Caco-2 (cell line): ENCODE measurements at regions of chr13 and their contacts with region 1.

Region 1: GRCh38 chr13:113863436-113864272 is at the start of gene GAS6:
- DNase-seq: peak; percentile 64 to 77
- H3K4me3 ChIP-seq: peak within 1 kb of the TSS; percentile 71
- H3K4me3 Mint-ChIP-seq: peak within 1 kb of the TSS; percentile 77
- H3K27ac Mint-ChIP-seq: peak within 1 kb of the TSS; percentile 67
- H3K4me1 ChIP-seq: peaks cover 44% of the 10 kb centered on the region
- H3K4me1 Mint-ChIP-seq: peaks cover 27% of the 10 kb centered on the region
- H3K27me3 ChIP-seq: no peaks in the 10 kb centered on the region
- H3K27me3 Mint-ChIP-seq: no peaks in the 10 kb centered on the region
- CTCF ChIP-seq: peak in 1 of 2 experiments; percentile 50
- total RNA-seq, gene GAS6: 29.9 and 34.8 TPM in 2 replicates

Region 2: GRCh38 chr13:113809934-113810333 is 53.7 kb before region 1 on chr13:
- CTCF ChIA-PET with region 1: no interaction called
- POLR2A ChIA-PET with region 1: no interaction called
- intact Hi-C with region 1: no loop called
- DNase-seq: no peak
- H3K4me3 ChIP-seq: no peak overlapping the region
- H3K4me3 Mint-ChIP-seq: no peak overlapping the region
- H3K27ac Mint-ChIP-seq: no peak overlapping the region
- H3K4me1 ChIP-seq: peaks cover 6% of the 10 kb centered on the region; the same call in 1 of the 2 replicates
- H3K4me1 Mint-ChIP-seq: no peaks in the 10 kb centered on the region
- H3K27me3 ChIP-seq: no peaks in the 10 kb centered on the region
- H3K27me3 Mint-ChIP-seq: no peaks in the 10 kb centered on the region
- CTCF ChIP-seq: no peak

Region 3: DNA sequence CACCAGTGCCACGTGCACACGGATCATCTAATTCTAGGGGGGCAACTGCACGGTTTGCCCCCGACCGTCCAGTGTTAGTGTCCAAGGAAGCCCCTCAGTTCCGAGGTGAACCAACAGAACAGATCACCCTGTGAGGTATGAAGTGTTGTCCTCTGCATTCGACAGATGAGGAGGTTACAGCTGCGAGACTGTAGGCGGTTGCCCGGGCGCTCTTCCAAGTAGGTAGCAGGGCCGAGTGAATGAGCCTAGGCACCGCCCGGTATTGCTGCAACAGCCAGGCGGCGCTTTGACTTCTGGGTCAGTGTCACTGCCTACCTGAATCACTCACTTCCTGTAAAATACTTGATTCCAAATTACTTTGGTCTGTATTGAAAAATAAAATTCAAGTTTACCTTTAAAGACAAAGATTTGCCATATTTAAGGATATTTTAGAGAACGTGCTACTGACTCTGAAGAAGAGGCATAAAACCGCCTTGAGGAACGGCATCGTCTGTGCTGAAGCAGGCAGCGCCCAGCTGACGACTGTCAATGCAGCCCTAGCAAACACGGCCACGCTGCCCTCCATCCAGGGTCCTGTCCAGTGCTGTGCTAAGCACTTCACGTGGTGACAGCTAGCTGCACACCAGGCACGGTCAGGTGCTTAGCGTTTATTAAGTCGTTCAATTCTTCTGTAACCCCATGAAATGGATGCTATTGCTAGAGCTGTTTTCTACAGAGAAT is 288.1 kb after region 1 on chr13:
- CTCF ChIA-PET with region 1: no interaction called
- POLR2A ChIA-PET with region 1: no interaction called
- intact Hi-C with region 1: no loop called
- DNase-seq: no peak
- H3K4me3 ChIP-seq: no peak overlapping the region
- H3K4me3 Mint-ChIP-seq: no peak overlapping the region
- H3K27ac Mint-ChIP-seq: no peak overlapping the region
- H3K4me1 ChIP-seq: no peaks in the 10 kb centered on the region
- H3K4me1 Mint-ChIP-seq: no peaks in the 10 kb centered on the region
- H3K27me3 ChIP-seq: no peaks in the 10 kb centered on the region
- H3K27me3 Mint-ChIP-seq: peaks cover 11% of the 10 kb centered on the region
- CTCF ChIP-seq: no peak

Region 4: DNA sequence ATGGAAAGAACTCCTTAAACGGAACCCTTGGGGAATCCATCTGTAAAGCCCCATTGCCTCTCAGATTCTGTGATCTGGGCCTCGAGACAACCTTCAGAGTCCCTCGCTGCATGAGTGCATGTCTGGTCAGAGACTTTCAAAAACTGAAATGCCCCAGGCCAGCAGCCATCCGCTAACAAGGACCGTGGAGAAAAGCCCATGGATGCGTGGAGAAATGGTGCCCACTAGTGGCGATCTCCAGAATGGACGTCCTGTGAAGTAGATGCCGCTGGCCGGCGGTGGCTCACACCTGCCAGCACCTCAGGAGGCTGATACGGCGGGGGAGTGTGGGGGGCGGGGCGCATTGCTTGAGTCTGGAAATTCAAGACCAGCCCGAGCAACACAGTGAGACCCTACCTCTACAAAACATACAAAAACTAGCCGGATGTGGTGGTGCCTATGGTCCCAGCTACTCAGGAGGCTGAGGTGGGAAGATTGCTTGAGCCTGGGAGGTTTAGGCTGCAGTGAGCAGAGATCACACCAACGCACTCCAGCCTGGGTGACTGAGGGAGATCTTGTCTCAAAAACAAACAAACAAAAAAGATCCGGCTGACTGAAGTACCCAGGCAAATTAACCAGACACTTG is 363.2 kb after region 1 on chr13:
- CTCF ChIA-PET with region 1: no interaction called
- POLR2A ChIA-PET with region 1: no interaction called
- intact Hi-C with region 1: loop called (anchors 5 kb)
- DNase-seq: peak; percentile 88 to 90
- H3K4me3 ChIP-seq: no peak overlapping the region
- H3K4me3 Mint-ChIP-seq: no peak overlapping the region
- H3K27ac Mint-ChIP-seq: no peak overlapping the region
- H3K4me1 ChIP-seq: no peaks in the 10 kb centered on the region
- H3K4me1 Mint-ChIP-seq: peaks cover 16% of the 10 kb centered on the region
- H3K27me3 ChIP-seq: no peaks in the 10 kb centered on the region
- H3K27me3 Mint-ChIP-seq: peaks cover 3% of the 10 kb centered on the region
- CTCF ChIP-seq: peak; percentile 86 to 97